ENCODE measurements at regions of chrX and their contacts with region 1.

Region 1: GRCh38 chrX:132022967-132023895 is at the start of gene STK26:
- DNase-seq: peak; percentile 77
- H3K4me3 Mint-ChIP-seq: peak within 1 kb of the TSS; percentile 91
- H3K27ac Mint-ChIP-seq: peak within 1 kb of the TSS; percentile 94
- H3K4me1 Mint-ChIP-seq: peaks cover 22% of the 10 kb centered on the region
- H3K27me3 Mint-ChIP-seq: no peaks in the 10 kb centered on the region
- total RNA-seq, gene STK26: 108 and 115 TPM in 2 replicates

Region 2: DNA sequence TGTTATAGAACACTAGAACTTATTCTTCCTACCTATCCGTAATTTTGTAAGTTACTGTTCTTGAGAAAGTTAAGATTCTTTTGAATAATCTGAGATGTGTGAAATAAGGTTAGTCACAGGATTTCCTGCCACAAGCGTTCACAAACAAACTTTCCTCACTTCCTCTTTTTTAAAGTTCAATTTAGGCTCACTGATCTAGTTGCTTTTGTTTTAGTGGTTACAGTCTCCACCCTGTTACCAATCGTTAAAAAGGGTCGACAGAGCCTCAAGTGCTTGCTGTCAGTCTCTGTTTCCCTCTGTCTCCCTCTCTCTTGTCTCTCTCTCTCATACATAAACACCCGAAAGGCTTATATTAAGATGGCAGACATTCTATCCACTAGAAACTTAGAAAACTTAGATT is 36.0 kb before region 1 on chrX:
- intact Hi-C with region 1: loop called (anchors 1 kb)
- DNase-seq: peak; percentile 10
- H3K4me3 Mint-ChIP-seq: peak overlapping the region; percentile 53
- H3K27ac Mint-ChIP-seq: peak overlapping the region; percentile 95
- H3K4me1 Mint-ChIP-seq: peaks cover 37% of the 10 kb centered on the region
- H3K27me3 Mint-ChIP-seq: no peaks in the 10 kb centered on the region

Region 3: GRCh38 chrX:132059973-132060540 is 36.8 kb after region 1 on chrX:
- intact Hi-C with region 1: loop called (anchors 5 kb)
- DNase-seq: no peak
- H3K4me3 Mint-ChIP-seq: no peak overlapping the region
- H3K27ac Mint-ChIP-seq: peak overlapping the region; percentile 5
- H3K4me1 Mint-ChIP-seq: peaks cover 13% of the 10 kb centered on the region
- H3K27me3 Mint-ChIP-seq: no peaks in the 10 kb centered on the region

Region 4: GRCh38 chrX:132077414-132077813 is 54.2 kb after region 1 on chrX:
- intact Hi-C with region 1: no loop called
- DNase-seq: no peak
- H3K4me3 Mint-ChIP-seq: no peak overlapping the region
- H3K27ac Mint-ChIP-seq: no peak overlapping the region
- H3K4me1 Mint-ChIP-seq: no peaks in the 10 kb centered on the region
- H3K27me3 Mint-ChIP-seq: no peaks in the 10 kb centered on the region

Region 5: DNA sequence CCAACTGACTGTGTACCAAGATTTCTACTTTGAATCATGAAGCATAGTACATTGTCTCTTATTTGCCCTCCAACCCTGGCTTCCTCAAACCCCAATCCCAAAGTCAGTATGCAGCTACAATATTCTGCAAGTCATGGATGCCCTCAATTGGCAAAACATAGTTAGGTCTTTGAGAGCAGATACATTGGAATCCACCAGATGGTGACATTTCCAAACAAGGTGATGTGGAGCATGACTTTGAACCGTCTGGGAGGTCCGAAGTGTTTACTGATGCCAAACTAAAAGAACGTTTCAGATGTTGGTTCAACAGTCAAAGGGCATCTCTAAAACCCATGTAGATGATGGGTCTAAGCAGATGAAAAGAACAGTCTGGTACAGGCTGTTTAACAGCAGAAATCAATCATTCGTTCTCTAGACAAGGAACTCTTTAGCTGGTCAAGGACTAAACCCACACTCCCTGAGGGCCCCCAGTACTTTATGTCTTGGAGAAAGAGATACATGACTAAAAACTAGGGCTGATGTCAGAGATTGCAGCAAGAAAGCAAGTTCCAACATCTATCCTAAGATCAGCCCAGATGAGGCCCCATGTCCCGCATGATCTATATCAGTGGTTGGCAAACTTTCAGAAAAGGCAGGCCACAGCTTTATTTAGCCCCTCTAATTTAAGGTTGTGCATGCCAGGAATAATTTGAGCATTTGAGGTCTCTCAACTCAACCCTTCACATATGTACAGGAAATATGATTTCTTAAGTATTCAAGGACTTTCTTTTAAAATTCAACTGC is 148.4 kb after region 1 on chrX:
- intact Hi-C with region 1: no loop called
- DNase-seq: no peak
- H3K4me3 Mint-ChIP-seq: no peak overlapping the region
- H3K27ac Mint-ChIP-seq: no peak overlapping the region
- H3K4me1 Mint-ChIP-seq: no peaks in the 10 kb centered on the region
- H3K27me3 Mint-ChIP-seq: peaks cover 10% of the 10 kb centered on the region

Region 6: DNA sequence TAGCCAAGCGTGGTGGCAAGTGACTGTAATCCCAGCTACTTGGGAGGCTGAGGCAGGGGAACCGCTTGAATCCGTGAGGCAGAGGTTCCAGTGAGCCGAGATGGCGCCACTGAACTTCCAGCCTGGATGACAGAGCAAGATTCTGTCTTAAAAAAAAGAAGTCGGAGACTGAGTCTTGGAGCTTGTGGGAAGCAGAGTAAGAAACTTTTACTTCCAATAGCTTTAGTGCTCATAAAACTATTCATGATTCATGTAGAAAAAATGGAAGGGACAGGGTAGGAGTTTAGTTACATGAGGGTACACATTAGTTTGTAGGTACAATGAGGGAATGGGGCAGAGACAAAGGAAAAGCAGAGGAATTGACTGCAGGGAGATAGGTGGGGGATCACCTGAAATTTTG is 176.7 kb after region 1 on chrX:
- intact Hi-C with region 1: no loop called
- DNase-seq: no peak
- H3K4me3 Mint-ChIP-seq: no peak overlapping the region
- H3K27ac Mint-ChIP-seq: no peak overlapping the region
- H3K4me1 Mint-ChIP-seq: no peaks in the 10 kb centered on the region
- H3K27me3 Mint-ChIP-seq: no peaks in the 10 kb centered on the region